Cardiac septum (tissue), 1 donor: ENCODE measurements at regions of chr12 and their contacts with region 1.

Region 1: DNA sequence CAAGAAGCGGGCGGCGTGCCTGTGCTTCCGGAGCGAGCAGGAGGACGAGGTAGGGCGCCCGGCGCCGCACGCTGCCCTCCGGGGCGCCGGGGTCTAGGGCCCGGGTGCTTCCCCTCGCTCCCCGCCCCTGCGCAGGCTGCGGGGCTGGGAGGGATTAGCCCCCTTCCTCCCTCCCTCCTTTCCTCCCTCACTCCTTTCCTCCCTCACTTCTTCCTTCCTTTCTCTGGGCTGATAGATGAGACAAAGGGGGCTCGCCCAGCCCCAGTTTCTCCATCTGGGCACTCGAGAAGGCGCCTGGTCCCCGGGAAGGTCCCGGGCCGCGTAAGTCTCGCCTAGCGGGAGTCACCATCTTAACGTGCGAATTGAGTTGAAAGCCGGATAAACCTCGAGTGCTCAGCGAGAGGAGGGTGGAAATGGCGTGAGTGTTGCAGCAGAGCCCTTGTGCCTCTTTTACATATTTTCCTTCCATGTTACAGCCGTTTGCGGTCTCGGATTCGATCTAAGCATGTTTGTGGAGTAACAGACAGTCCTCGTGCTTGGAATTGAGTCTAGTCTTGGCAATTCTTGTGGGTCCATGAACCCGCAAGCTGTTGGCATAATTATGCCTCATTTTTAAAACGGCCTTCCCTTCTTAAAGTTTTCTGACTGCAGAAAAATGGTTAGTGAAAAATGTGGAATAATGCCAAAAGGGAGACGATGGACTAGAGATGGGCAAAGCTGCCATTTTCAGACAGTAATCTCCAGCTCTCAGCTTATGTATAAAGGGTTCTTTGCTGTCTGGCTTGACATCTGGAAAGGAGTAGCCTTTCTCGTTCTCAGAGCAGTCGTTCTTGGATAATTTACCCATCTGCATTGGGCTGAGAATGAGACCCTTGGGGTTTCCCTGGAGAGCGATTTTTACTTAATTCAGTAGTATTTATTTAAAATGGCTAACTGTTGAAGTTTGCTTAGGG is 924 bp downstream of the NUDT4 start:
- DNase-seq: no peak

Region 2: DNA sequence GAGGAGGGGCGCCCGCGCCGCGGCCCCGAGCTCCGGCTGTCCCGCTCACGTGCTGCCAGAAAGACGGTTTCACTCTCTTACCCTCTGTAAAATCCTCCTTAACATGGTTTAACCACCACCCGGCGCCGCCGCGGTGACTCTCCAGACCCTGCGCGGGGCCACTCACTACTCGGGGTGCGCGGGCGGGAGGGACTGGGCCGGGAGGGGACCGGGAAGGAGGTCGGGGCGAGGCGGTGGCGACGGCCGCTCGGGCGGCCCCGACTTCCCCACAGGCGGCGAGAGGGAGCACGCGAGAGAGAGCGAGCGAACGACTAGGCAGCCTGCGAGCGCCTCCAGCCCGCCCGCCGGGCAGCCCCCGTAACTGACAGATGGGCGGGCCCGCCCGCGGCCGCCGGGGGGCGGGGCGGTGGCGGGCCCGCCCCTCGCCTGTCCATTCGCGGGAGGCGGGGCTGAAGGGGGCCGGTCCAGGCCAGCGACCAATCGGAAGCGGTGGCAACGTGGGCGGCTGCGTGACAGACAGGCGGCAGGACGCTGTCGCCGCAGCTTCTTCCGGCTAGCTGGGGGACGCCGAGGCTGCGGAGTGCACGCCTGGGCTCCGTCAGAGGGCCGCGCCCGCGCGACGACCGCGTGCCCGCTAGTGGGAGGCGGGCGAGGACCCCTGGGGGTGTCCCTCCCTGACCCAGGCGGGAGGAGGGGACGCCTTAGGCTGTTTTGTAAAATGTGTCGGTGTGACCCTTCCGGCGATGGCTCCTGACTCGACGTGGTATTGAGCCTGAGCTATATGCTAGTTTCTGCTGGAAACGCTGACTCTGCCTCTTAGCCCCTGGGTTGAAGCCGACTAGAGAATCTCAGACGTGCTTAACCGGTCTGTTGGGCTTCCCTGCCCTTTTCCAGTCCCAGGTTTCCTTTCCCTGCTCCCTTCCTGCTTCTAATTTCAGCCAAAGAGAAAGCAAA is 449.4 kb before region 1 on chr12 and contains the start of gene EEA1:
- intact Hi-C with region 1: loop called (anchors 10 kb)
- DNase-seq: peak; percentile 99
- total RNA-seq, gene EEA1: 34.1 TPM

Region 3: GRCh38 chr12:93025145-93025805 is 353.4 kb before region 1 on chr12:
- intact Hi-C with region 1: loop called (anchors 5 kb)
- DNase-seq: no peak

Region 4: DNA sequence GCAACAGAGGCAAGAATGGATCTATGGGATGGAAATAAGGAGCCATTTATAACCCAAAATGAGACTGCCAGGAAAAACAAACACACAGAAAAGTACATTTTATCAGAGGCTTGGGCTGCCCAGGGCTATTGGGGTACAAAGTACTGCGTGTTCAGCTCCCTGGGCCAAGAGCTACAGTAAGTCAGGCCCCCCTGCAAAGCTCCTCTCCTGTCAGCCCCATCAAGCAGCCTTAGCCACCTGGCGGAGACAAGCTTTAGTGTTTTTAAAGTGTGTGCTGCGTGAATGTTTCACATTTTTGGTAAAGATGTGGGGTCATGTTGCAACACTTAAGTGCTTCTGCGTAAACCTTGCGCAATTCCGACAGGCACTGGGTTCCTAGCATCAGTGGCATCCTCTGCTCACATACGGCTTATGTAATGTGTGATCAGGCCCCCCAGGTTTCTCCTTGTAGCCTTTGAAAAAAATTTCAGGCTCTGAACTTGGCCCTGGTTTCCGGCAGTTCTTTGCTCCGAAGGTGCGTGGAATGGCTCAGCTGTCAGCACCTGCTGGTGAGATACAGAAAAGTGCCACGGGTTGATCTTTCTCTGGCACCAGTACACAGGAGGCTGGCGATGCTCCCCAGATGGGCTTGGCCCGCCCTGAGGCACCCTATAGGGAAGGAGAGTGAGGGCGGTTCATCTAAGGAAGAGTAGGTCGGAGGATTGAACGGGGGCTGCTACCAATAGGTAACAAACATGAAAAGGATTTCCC is 250.9 kb before region 1 on chr12:
- intact Hi-C with region 1: loop called (anchors 5 kb)
- DNase-seq: peak; percentile 86

Region 5: GRCh38 chr12:93174048-93174447 is 204.6 kb before region 1 on chr12:
- intact Hi-C with region 1: loop called (anchors 5 kb)
- DNase-seq: no peak

Region 6: GRCh38 chr12:93229494-93230325 is 148.9 kb before region 1 on chr12:
- intact Hi-C with region 1: no loop called
- DNase-seq: no peak

Region 7: GRCh38 chr12:93302331-93303229 is 76.1 kb before region 1 on chr12:
- intact Hi-C with region 1: loop called (anchors 5 kb)
- DNase-seq: no peak